ENCODE measurements at regions of chr17 and their contacts with region 1.

Region 1: GRCh38 chr17:35089586-35090296 is 26.2 kb upstream of the RFFL start:
- DNase-seq: peak; percentile 8 to 15
- H3K4me3 ChIP-seq: peak overlapping the region in 1 of 3 donors; percentile 80
- H3K27ac ChIP-seq: peak overlapping the region; percentile 73 to 94 (median 82)
- H3K4me1 ChIP-seq: peaks cover 17 to 20% of the 10 kb centered on the region in 2 donors
- H3K27me3 ChIP-seq: no peaks in the 10 kb centered on the region
- CTCF ChIP-seq: peak in 2 of 6 experiments; percentile 23 to 46
- POLR2A ChIP-seq: no peak

Region 2: DNA sequence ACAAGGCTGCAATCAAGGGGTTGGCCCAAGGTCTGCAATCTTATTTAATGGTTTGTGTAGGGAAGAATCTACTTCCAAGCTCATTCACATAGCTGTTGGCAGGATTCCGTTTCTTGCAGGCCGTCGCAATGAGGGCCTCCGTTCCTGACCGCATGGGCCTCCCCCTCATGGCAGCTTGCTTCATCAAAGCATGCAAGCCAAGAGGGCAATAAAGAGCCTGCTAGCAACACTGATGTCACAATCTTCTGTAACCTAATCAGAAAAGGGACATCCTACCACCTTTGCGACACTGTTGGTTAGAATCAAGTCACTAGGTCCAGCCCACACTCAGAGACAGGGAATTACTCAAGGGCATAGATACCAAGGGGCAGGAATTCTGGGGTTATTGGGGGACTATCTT is 224.0 kb before region 1 on chr17:
- intact Hi-C with region 1: no loop called
- DNase-seq: no peak
- H3K4me3 ChIP-seq: no peak overlapping the region
- H3K27ac ChIP-seq: no peak overlapping the region
- H3K4me1 ChIP-seq: no peaks in the 10 kb centered on the region
- H3K27me3 ChIP-seq: no peaks in the 10 kb centered on the region
- CTCF ChIP-seq: no peak
- POLR2A ChIP-seq: no peak

Region 3: DNA sequence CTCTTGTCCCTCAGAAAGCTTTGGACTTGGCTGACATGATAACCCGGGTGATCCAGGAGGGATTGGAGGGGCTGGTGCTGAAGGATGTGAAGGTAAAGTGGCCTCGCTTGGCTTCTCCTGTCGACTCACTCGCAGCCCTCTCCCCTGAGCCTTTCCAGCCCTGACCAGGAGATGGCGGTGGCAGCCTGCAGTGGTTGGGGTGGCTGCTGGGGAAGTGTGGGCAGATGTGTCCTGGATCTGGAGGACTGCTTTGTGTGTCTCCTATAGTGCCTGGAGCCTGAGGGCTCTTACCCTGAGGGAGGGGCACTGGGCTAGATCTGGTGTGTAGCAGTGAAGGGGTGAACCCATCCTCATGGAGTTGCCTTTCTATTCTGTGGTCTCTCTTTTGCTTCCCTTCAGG is 91.5 kb before region 1 on chr17:
- intact Hi-C with region 1: loop called (anchors 5 kb)
- DNase-seq: peak; percentile 84 to 87
- H3K4me3 ChIP-seq: no peak overlapping the region
- H3K27ac ChIP-seq: peak overlapping the region; percentile 91 to 97 (median 95)
- H3K4me1 ChIP-seq: peaks cover 39 to 54% of the 10 kb centered on the region in 2 donors
- H3K27me3 ChIP-seq: no peaks in the 10 kb centered on the region
- CTCF ChIP-seq: peak; percentile 69 to 97 (median 90)
- POLR2A ChIP-seq: no peak